BJ (cell line): ENCODE measurements at regions of chr1 and their contacts with region 1.

Region 1: DNA sequence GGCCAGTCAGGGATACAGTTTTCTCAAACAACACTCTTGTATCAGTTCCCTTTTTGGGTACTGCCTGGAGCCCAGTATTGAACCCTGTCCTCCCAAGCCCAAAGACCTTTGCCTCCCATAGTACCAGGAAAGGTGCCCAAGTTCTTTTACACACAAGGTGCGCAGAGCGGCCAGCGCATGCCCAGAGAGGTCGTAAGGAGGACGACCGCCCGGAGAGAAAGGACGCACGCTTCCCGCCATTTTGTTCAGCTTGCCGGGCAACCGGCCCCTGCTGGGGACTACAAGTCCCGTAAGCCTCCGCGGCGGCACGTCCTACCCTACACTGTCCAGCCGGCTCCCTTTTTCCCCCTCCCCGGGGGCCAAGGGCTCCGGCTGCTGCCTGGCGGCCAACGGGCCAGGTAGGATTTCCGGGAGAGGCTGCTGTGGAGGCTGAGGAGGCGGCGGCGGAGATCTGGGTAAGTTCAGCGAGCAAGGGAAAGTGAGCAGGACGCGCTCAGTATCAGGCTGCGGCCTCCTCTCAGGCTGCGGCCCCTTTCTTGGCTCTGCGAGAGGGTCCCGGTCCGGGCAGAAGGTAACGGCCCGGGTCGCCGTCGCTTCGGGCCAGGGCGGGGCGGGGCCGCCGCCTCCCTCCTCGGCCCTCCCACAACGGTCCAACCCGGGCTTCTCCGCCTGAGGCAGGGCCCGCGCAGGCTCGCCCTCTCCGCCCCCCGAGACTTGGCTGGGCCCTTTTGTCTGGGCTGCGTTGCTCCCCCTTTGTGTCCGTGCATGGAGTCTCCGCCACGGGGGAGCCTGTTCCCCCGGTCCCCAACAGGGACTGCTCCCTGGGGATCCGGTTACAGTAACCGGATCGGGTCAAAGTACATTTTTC is at the start of gene PHACTR4:
- DNase-seq: peak; percentile 48
- H3K4me3 ChIP-seq: peak within 1 kb of the TSS; percentile 63
- H3K27me3 ChIP-seq: no peaks in the 10 kb centered on the region
- CTCF ChIP-seq: no peak
- polyA plus RNA-seq, gene PHACTR4: 5.2 and 9.1 TPM in 2 replicates

Region 2: DNA sequence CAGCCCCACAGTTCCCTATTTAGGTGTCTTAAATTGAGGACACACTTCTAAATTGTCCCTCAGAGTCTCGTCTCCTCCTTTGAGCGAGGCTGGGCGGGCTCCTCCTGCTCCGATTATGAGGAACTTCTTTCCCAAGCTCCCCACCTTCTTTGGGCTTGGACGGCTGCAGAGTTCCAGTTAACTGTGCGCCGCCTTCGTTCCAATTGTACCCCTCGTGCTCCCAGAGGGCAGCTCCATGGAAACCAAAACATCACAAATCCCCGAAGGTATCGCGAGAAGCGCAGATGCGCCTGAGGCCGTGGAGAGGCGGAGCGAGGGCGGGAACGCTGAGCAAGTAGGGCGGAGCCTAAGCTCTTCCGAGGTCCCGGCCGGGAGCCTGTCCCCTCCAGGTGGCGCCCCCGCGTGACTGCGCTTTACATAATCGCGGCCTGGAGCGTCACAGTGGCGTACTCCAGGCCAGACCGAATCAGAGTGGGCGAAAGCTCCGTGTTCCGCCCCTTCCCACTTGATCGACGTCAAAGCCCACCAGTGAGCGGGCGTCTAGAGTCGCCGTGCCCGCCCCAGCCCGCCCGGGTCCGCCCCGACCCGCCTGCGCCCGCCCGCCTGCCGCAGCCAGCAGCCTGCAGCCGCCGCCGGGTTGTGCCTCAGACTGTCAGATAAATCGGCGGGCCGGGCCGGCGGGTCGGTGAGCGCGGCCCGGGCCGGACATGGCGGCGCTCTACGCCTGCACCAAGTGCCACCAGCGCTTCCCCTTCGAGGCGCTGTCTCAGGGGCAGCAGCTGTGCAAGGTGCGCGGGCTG is 644.0 kb before region 1 on chr1 and contains the start of gene FAM76A:
- CTCF ChIA-PET with region 1: no interaction called
- POLR2A ChIA-PET with region 1: interaction called, 11 read pairs
- DNase-seq: peak; percentile 94
- H3K4me3 ChIP-seq: peak within 1 kb of the TSS; percentile 73
- H3K27me3 ChIP-seq: no peaks in the 10 kb centered on the region
- CTCF ChIP-seq: peak; percentile 56
- polyA plus RNA-seq, gene FAM76A: 3.9 and 5.7 TPM in 2 replicates

Region 3: GRCh38 chr1:28354121-28354520 is 15.5 kb before region 1 on chr1:
- CTCF ChIA-PET with region 1: interaction called, 11 read pairs
- POLR2A ChIA-PET with region 1: no interaction called
- DNase-seq: no peak
- H3K4me3 ChIP-seq: no peak overlapping the region
- H3K27me3 ChIP-seq: no peaks in the 10 kb centered on the region
- CTCF ChIP-seq: no peak